ENCODE measurements at regions of chr20 and their contacts with region 1.

Region 1: DNA sequence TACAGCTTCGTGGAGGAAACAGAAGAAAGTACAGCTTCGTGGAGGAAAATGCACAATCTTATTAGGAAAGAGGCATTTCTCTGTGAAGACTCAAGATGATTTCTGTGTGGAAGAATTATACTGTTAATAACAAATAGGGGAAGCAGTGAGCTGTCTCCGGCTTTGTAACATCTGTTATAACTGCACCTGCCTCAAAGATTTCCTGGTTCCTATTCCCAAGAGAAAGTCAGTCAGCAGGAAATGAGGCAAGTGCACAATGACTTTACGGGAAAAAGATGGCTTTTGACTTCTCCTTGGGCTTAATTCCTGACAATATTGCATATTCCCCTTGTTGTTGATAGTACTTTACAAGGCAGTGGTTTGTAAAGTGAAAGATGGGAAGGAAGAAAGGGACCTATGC is 538.5 kb downstream of the BMP2 start:
- DNase-seq: no peak
- H3K4me3 ChIP-seq: no peak overlapping the region
- H3K27ac ChIP-seq: no peak overlapping the region
- H3K4me1 ChIP-seq: no peaks in the 10 kb centered on the region
- H3K27me3 ChIP-seq: no peaks in the 10 kb centered on the region
- CTCF ChIP-seq: no peak
- EP300 ChIP-seq: no peak
- POLR2A ChIP-seq: no peak

Region 2: GRCh38 chr20:6588296-6588695 is 717.7 kb before region 1 on chr20:
- in situ Hi-C with region 1: no loop called
- intact Hi-C with region 1: loop called (anchors 5 kb)
- DNase-seq: peak; percentile 18
- H3K4me3 ChIP-seq: no peak overlapping the region
- H3K27ac ChIP-seq: no peak overlapping the region
- H3K4me1 ChIP-seq: peaks cover 0 to 5% (median 0%) of the 10 kb centered on the region in 4 donors
- H3K27me3 ChIP-seq: no peaks in the 10 kb centered on the region
- CTCF ChIP-seq: no peak
- EP300 ChIP-seq: no peak
- POLR2A ChIP-seq: no peak

Region 3: DNA sequence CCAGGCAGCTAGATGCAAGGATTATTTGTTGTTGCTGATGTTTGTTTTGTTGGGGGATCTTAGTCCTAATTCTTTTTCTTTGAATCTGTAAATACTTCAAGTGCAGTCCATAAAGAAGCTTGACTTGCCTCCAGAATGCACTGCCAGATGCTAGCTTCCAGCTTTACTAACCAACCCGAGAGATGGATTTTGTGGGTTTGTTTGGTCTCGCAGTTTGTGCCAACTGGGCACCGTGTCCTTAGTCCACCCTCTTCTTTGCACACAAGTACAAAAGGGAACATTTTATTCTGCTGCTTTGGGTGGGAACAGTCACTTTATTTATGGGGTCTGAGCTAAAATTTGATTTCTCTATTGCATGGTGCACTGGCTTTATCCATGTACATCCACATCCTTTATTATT is 1038.1 kb after region 1 on chr20:
- in situ Hi-C with region 1: no loop called
- intact Hi-C with region 1: no loop called
- DNase-seq: no peak
- H3K4me3 ChIP-seq: no peak overlapping the region
- H3K27ac ChIP-seq: no peak overlapping the region
- H3K4me1 ChIP-seq: peaks cover 0 to 30% (median 3%) of the 10 kb centered on the region in 4 donors
- H3K27me3 ChIP-seq: no peaks in the 10 kb centered on the region
- CTCF ChIP-seq: no peak
- EP300 ChIP-seq: no peak
- POLR2A ChIP-seq: no peak

Measured in transverse colon (tissue), 4 donors.